ENCODE measurements at regions of chr11 and their contacts with region 1.

Region 1: GRCh38 chr11:48210052-48210451 is 6.6 kb upstream of the OR4B1 start:
- DNase-seq: peak; percentile 2
- ATAC-seq: peak; percentile 76
- H3K4me3 ChIP-seq: no peak overlapping the region
- H3K27ac ChIP-seq: no peak overlapping the region
- H3K4me1 ChIP-seq: no peaks in the 10 kb centered on the region
- H3K27me3 ChIP-seq: no peaks in the 10 kb centered on the region
- CTCF ChIP-seq: no peak
- EP300 ChIP-seq: no peak
- POLR2A ChIP-seq: no peak
- RAD21 ChIP-seq: no peak

Region 2: GRCh38 chr11:47443042-47443700 is 766.9 kb before region 1 on chr11:
- CTCF ChIA-PET with region 1: no interaction called
- POLR2A ChIA-PET with region 1: no interaction called
- in situ Hi-C with region 1: no loop called
- intact Hi-C with region 1: no loop called
- DNase-seq: no peak
- ATAC-seq: peak; percentile 56
- H3K4me3 ChIP-seq: no peak overlapping the region
- H3K27ac ChIP-seq: no peak overlapping the region
- H3K4me1 ChIP-seq: peaks cover 58% of the 10 kb centered on the region
- H3K27me3 ChIP-seq: no peaks in the 10 kb centered on the region
- CTCF ChIP-seq: no peak
- EP300 ChIP-seq: no peak
- POLR2A ChIP-seq: no peak
- RAD21 ChIP-seq: no peak

Region 3: DNA sequence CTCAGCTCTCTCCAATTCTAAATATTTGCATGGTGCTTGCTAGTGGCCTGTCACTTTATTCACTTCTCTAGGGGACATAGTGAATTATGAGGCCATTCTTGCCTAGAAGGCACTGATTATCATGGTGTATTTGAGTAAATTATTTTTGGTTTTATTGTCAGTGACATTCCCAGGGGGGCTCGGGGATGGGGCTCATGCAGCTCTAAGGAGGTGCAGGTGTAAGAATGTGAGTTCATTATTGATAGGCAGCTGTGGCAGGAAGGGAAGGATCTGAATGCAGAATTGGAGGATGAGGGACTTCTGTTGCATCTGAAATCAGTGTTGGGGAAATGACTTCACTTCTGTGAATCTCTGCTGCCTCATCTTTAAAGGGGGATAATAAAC is 47.2 kb before region 1 on chr11:
- CTCF ChIA-PET with region 1: no interaction called
- POLR2A ChIA-PET with region 1: no interaction called
- in situ Hi-C with region 1: no loop called
- intact Hi-C with region 1: no loop called
- DNase-seq: no peak
- ATAC-seq: no peak
- H3K4me3 ChIP-seq: no peak overlapping the region
- H3K27ac ChIP-seq: no peak overlapping the region
- H3K4me1 ChIP-seq: no peaks in the 10 kb centered on the region
- H3K27me3 ChIP-seq: no peaks in the 10 kb centered on the region
- CTCF ChIP-seq: no peak
- EP300 ChIP-seq: no peak
- POLR2A ChIP-seq: no peak
- RAD21 ChIP-seq: no peak

Region 4: GRCh38 chr11:48172818-48173609 is 37.0 kb before region 1 on chr11:
- CTCF ChIA-PET with region 1: interaction called, 4 read pairs
- POLR2A ChIA-PET with region 1: no interaction called
- in situ Hi-C with region 1: no loop called
- intact Hi-C with region 1: loop called (anchors 2 kb)
- DNase-seq: peak; percentile 43
- ATAC-seq: peak; percentile 98
- H3K4me3 ChIP-seq: no peak overlapping the region
- H3K27ac ChIP-seq: no peak overlapping the region
- H3K4me1 ChIP-seq: no peaks in the 10 kb centered on the region
- H3K27me3 ChIP-seq: no peaks in the 10 kb centered on the region
- CTCF ChIP-seq: peak; percentile 89
- EP300 ChIP-seq: no peak
- POLR2A ChIP-seq: no peak
- RAD21 ChIP-seq: peak; percentile 63

Region 5: DNA sequence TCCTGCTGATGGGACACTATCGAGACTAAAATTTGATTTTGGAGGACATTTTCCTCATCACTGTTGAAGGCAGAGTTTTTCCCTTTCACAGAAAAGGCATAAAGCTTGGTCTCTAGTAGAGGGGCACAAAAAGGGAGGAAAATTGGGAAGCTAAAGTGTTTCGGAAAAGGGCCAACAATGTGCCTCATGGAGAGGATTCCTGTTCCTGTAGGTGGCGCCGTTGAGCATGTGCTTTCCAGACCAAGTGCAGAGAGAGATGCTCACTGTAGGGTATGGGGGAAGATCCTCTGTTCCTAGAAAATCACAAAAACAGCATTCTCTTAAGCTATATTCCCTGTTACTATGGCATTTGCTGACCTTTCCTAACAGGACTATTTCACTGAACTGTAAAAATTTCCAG is 174.6 kb after region 1 on chr11:
- CTCF ChIA-PET with region 1: no interaction called
- POLR2A ChIA-PET with region 1: no interaction called
- in situ Hi-C with region 1: no loop called
- intact Hi-C with region 1: no loop called
- DNase-seq: no peak
- ATAC-seq: no peak
- H3K4me3 ChIP-seq: no peak overlapping the region
- H3K27ac ChIP-seq: no peak overlapping the region
- H3K4me1 ChIP-seq: no peaks in the 10 kb centered on the region
- H3K27me3 ChIP-seq: no peaks in the 10 kb centered on the region
- CTCF ChIP-seq: no peak
- EP300 ChIP-seq: no peak
- POLR2A ChIP-seq: no peak
- RAD21 ChIP-seq: no peak